Right lobe of liver (tissue), 6 donors: ENCODE measurements at regions of chr5 and their contacts with region 1.

Region 1: DNA sequence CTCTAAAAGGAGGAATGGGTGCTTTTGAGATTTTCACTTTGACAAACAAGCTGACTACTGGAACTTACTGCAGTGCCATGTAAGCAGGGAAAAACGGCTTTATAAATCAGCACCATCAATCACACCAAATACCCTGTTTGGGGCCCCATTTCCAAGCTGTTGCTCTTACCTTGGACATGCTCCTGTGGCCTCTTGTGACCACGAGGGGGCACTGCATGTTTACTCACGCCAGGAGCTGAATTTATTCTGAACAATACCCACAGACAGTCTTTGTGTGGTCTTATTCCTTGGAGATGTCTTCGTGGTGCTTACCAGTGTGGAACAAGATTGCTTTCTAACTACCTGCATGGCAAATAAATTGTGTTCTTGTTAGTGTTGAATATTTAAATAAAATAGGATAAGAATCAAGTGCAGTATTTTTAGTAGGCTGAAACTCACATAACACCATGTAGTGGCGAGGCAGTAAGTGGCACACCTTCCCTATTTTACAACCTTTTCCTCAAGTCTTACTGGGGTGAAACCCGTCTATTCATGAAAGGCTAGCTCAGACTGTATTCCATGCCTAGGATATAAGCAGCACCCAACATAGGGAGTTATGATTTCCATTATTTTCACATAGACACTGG is 155.5 kb upstream of the NMUR2 start:
- DNase-seq: peak; percentile 62 to 72 (median 68)
- ATAC-seq: peak; percentile 78 to 88 (median 84)
- H3K4me3 ChIP-seq: no peak overlapping the region
- H3K27ac ChIP-seq: no peak overlapping the region
- H3K4me1 ChIP-seq: no peaks in the 10 kb centered on the region
- H3K27me3 ChIP-seq: no peaks in the 10 kb centered on the region
- CTCF ChIP-seq: peak; percentile 74 to 87 (median 84)
- POLR2A ChIP-seq: no peak

Region 2: DNA sequence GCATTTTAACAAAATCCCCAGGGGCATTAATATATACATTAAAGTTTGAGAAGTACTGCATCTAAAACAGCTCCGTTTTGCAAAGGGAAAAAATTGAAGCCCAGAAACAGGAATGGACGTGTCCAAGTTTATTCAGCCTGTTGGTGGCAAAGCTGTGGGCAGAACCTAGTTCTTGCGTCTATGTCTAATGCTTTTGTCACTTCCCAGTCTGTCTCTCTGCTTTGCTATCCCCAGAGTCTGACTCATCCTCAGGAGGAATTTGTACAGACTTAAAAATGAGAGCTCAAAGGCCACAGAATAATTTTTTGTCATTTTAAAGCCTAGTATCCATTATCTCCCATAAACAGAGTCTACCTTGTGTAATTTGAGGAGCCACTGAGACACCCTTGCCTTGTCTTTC is 599.0 kb after region 1 on chr5:
- intact Hi-C with region 1: loop called in 1 of 2 experiments (anchors 10 kb)
- DNase-seq: no peak
- ATAC-seq: no peak
- H3K4me3 ChIP-seq: no peak overlapping the region
- H3K27ac ChIP-seq: no peak overlapping the region
- H3K4me1 ChIP-seq: no peaks in the 10 kb centered on the region
- H3K27me3 ChIP-seq: no peaks in the 10 kb centered on the region
- CTCF ChIP-seq: no peak
- POLR2A ChIP-seq: no peak